Right ventricle myocardium superior (tissue), 1 donor: ENCODE measurements at regions of chr20 and their contacts with region 1.

Region 1: DNA sequence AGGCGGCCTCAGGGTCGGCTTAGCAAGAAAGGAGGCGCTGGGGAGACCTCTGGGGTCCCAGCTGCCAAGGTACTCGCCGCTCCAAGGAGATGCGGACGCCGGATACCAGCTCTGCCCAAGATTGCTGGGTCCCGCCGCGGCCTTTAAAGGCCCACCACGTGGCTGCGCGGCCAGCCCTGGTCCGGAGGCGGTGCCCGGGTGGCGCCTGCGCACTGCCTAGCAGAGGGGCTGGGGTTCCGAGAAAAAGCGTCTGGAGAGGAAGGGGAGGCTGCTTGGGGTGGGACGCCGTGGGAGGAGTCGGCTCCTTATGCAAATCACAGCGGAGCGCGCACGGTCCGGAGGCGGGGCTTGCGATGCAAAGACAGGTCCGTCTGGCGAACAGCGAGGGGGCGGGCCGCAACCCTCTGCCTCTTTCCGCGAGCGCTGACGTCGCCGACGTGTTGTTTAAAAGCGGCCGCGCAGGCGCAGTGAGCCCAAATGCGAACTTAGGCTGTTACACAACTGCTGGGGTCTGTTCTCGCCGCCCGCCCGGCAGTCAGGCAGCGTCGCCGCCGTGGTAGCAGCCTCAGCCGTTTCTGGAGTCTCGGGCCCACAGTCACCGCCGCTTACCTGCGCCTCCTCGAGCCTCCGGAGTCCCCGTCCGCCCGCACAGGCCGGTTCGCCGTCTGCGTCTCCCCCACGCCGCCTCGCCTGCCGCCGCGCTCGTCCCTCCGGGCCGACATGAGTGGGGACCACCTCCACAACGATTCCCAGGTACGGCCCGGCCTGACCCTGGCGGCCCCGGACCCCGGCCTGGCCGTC is at the start of gene TOP1:
- DNase-seq: peak; percentile 100
- ATAC-seq: peak; percentile 98
- total RNA-seq, gene TOP1: 20.6 TPM

Region 2: GRCh38 chr20:41078329-41078728 is 49.8 kb after region 1 on chr20:
- intact Hi-C with region 1: loop called (anchors 5 kb)
- DNase-seq: no peak
- ATAC-seq: peak; percentile 79